ENCODE measurements at regions of chr2 and their contacts with region 1.

Region 1: DNA sequence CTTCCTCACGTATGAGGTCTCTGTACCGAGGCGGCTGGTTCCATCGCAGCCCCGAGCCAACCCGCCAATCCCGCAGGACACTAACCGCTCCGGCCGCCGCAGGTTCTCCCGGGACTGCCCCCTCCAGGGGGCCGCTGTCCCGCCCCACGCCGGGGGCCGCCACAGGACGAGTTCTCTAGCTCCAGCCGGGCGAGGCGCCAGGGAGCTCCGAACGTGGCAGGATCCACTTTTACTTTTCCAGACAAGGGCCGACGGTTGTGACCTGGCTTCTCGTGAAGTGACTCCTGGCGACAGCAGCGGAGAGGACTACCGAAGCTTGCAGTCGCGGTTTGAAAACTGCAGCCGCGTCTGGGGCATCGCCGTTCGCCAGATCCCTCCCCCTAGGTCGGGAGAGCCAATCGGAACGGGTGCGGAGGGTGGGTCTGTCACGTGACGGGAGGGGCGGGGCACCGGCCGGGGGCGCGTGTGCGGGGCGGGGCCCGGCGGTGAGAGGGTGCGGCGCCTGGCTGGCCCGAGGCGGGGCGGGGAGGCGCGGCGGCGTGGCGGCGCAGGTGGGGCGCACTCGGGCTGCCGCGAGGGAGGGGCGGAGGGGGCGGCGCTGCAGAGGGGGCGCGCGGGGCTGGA is at the start of gene STK17B:
- DNase-seq: peak; percentile 98
- ATAC-seq: peak; percentile 66
- H3K4me3 Mint-ChIP-seq: peak within 1 kb of the TSS; percentile 96
- H3K27ac Mint-ChIP-seq: peak within 1 kb of the TSS; percentile 94
- H3K4me1 Mint-ChIP-seq: peaks cover 29% of the 10 kb centered on the region
- H3K27me3 Mint-ChIP-seq: no peaks in the 10 kb centered on the region
- total RNA-seq, gene STK17B: 453 to 469 TPM

Region 2: DNA sequence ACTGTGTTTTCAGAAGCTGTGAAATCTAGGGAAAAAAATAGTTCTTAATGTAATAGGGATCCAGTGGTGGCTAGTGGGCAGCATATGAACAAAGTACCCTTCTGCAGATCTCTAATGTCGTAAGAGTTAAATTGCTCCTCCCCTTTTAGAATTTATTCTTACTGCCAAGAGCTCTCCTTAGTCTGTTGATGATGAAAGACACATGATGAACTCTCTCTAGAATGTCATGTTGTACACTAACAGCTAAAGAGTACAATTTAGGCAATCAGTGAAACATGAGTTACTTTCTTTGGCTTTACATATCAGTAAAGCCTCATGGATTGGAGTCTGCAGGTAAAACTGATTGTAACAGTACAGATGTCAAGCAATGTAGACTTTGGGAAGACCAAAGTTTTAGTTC is 430.2 kb before region 1 on chr2:
- CTCF ChIA-PET with region 1: no interaction called
- POLR2A ChIA-PET with region 1: no interaction called
- DNase-seq: no peak
- ATAC-seq: no peak
- H3K4me3 Mint-ChIP-seq: no peak overlapping the region
- H3K27ac Mint-ChIP-seq: no peak overlapping the region
- H3K4me1 Mint-ChIP-seq: no peaks in the 10 kb centered on the region
- H3K27me3 Mint-ChIP-seq: no peaks in the 10 kb centered on the region

Region 3: GRCh38 chr2:196012314-196012713 is 159.0 kb before region 1 on chr2:
- CTCF ChIA-PET with region 1: no interaction called
- POLR2A ChIA-PET with region 1: no interaction called
- DNase-seq: no peak
- ATAC-seq: no peak
- H3K4me3 Mint-ChIP-seq: no peak overlapping the region
- H3K27ac Mint-ChIP-seq: no peak overlapping the region
- H3K4me1 Mint-ChIP-seq: no peaks in the 10 kb centered on the region
- H3K27me3 Mint-ChIP-seq: peaks cover 4% of the 10 kb centered on the region

Region 4: GRCh38 chr2:196143730-196144131 is 27.6 kb before region 1 on chr2:
- CTCF ChIA-PET with region 1: interaction called, 3 read pairs
- POLR2A ChIA-PET with region 1: interaction called, 22 read pairs
- DNase-seq: no peak
- ATAC-seq: peak; percentile 17
- H3K4me3 Mint-ChIP-seq: peak overlapping the region; percentile 28
- H3K27ac Mint-ChIP-seq: peak overlapping the region; percentile 72
- H3K4me1 Mint-ChIP-seq: peaks cover 74% of the 10 kb centered on the region
- H3K27me3 Mint-ChIP-seq: no peaks in the 10 kb centered on the region

Region 5: GRCh38 chr2:196182439-196183171 is 11.2 kb after region 1 on chr2:
- CTCF ChIA-PET with region 1: interaction called, 14 read pairs
- POLR2A ChIA-PET with region 1: interaction called, 348 read pairs
- DNase-seq: no peak
- ATAC-seq: peak; percentile 13
- H3K4me3 Mint-ChIP-seq: peak overlapping the region; percentile 62
- H3K27ac Mint-ChIP-seq: peak overlapping the region; percentile 95
- H3K4me1 Mint-ChIP-seq: peaks cover 89% of the 10 kb centered on the region
- H3K27me3 Mint-ChIP-seq: no peaks in the 10 kb centered on the region

Region 6: DNA sequence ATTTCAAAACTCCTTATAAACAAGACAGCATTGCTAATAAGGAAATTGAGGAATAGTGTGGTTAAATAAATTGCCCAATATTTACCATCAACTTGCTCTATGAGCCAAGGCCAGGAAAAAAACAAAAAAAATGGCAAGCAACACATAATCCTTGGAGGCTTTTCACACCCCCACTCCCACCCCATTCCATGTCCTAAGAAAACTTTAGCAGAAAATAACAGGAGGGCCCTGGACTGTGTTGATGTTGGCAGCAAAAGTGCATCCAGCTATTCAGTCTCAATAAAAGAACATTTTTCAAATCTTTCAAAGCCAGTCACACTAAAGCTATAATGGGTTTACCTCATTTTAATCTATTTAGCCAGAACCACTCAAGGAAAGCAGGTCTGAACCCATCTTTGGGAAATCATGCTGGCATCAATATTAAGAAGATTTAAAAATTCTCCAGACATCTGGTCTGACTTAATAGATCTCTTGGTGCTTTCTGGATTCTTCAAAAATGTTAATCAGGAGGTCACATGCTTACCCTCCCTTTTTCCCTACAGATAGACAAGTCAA is 34.6 kb after region 1 on chr2:
- CTCF ChIA-PET with region 1: interaction called, 9 read pairs
- POLR2A ChIA-PET with region 1: interaction called, 39 read pairs
- DNase-seq: no peak
- ATAC-seq: no peak
- H3K4me3 Mint-ChIP-seq: no peak overlapping the region
- H3K27ac Mint-ChIP-seq: no peak overlapping the region
- H3K4me1 Mint-ChIP-seq: peaks cover 57% of the 10 kb centered on the region
- H3K27me3 Mint-ChIP-seq: no peaks in the 10 kb centered on the region

Region 7: GRCh38 chr2:196239622-196240587 is 68.5 kb after region 1 on chr2:
- CTCF ChIA-PET with region 1: interaction called, 80 read pairs
- POLR2A ChIA-PET with region 1: interaction called, 122 read pairs
- DNase-seq: peak; percentile 94
- ATAC-seq: peak; percentile 75
- H3K4me3 Mint-ChIP-seq: peak overlapping the region; percentile 58
- H3K27ac Mint-ChIP-seq: peak overlapping the region; percentile 99
- H3K4me1 Mint-ChIP-seq: peaks cover 86% of the 10 kb centered on the region
- H3K27me3 Mint-ChIP-seq: no peaks in the 10 kb centered on the region

Region 8: DNA sequence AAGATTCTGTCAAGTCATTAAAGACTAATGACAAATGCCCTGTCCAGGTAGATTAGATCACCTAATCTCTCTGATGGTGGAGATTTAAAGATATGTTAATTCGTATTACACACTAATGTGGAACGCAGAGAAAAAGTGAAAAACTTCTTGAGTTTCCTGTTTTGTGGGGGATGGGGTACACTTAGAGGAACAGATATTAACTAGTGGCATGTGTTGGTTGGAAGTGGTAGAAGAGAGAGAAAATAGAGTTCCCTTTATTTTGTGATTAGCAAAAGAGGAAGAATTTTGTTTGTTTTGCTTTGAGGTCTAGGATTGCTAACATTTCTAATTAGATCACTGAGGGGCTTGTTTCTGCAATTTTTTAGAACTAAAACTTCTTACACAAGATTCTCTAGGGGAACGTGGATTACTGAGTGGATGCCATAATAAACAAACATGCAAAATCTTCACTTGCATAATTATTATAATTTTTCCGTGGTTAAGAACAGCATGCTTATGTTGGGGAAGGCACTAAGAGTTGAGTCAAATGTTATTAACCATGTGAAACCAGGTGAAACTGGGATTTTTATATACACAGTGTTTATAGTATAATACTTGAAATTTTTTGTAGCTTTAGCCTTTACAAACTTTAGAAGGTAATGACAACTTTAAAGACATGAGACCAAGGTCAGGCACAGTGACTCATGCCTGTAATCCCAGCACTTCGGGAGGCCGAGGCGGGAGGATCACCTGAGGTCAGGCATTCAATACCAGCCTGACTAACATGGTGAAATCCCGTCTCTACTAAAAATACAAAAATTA is 97.4 kb after region 1 on chr2:
- CTCF ChIA-PET with region 1: interaction called, 40 read pairs
- POLR2A ChIA-PET with region 1: interaction called, 71 read pairs
- DNase-seq: no peak
- ATAC-seq: peak; percentile 37
- H3K4me3 Mint-ChIP-seq: peak overlapping the region; percentile 60
- H3K27ac Mint-ChIP-seq: peak overlapping the region; percentile 80
- H3K4me1 Mint-ChIP-seq: peaks cover 73% of the 10 kb centered on the region
- H3K27me3 Mint-ChIP-seq: no peaks in the 10 kb centered on the region

Region 9: DNA sequence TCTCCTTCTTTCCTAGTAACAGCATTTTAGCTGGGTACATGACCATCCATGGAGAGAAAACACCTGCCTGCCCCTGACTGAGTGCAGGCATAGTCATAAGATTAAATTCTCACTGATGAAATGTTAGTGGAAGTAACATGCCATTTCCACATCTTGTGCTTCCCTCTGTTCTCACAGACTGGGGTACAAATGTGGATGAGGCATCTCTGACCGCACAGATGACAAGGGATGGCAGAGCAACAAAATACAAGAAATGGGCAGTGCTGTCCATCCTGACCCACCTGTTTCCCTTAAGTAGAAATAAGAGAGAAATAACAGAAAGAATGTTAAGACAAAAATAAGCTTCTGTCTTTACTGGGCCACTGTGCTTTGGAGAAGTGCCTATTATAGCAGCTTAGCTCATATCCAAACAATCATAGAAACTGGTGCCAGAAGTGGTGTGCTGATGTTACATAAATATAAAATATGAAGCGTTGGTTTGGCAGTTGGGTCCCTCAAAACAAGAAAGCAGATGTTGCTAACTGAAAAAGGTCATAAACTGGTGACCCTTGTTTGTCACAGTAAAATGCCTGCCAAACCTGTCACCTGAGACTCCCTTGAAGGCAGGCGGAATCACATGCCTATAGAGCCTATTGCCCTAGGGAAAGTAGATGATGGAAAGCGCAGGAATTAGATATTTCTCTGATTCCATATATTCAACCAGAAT is 395.8 kb after region 1 on chr2:
- CTCF ChIA-PET with region 1: no interaction called
- POLR2A ChIA-PET with region 1: no interaction called
- DNase-seq: no peak
- ATAC-seq: no peak
- H3K4me3 Mint-ChIP-seq: no peak overlapping the region
- H3K27ac Mint-ChIP-seq: no peak overlapping the region
- H3K4me1 Mint-ChIP-seq: no peaks in the 10 kb centered on the region
- H3K27me3 Mint-ChIP-seq: peaks cover 20% of the 10 kb centered on the region

Region 10: GRCh38 chr2:196601430-196602306 is 430.3 kb after region 1 on chr2:
- CTCF ChIA-PET with region 1: no interaction called
- POLR2A ChIA-PET with region 1: no interaction called
- DNase-seq: no peak
- ATAC-seq: no peak
- H3K4me3 Mint-ChIP-seq: no peak overlapping the region
- H3K27ac Mint-ChIP-seq: no peak overlapping the region
- H3K4me1 Mint-ChIP-seq: no peaks in the 10 kb centered on the region
- H3K27me3 Mint-ChIP-seq: peaks cover 11% of the 10 kb centered on the region